Activated CD4-positive, alpha-beta T cell treated with anti-CD3 and anti-CD28 coated beads for 36 hours (primary cell): ENCODE measurements at regions of chr4 and their contacts with region 1.

Region 1: DNA sequence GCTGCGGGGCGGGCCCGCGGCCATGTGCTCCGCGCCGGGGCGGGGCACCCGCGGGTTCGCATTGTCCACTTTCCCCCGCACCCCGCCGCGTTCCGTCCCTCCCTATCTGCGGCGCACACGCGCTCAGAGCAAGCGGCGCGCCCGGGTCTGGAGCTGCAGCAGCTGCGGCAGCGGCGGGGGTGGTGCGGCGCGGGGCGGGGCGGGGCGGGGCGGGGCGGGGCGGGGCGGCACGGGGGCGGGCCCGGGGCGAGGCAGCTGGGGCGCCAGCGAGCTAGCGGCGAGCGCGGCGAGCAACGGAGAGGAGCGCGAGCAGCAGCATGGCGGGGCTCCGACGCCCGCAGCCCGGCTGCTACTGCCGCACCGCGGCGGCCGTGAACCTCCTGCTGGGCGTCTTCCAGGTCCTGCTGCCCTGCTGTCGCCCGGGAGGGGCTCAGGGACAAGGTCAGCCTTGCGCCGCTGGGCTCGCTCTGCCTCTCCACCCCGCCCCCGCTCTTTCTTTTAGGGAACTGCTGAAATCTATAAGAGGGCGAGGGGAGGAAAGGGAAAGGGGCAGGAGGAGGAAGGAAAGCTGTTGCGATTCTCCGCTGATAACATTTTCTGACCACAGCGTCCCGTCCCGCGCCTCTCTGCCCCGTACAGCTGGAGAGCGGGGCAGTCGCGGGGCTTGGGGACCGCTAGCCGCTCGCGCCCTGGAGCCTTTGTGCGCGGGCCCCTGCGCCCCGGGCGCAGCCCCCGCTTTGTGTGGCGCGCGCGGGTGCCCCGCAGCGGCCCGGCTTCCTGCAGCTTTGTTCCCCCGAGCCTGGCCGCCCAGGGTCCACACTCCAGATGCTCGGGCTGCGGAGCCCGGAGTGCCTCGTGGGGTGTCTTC is at the start of gene TMEM131L:
- DNase-seq: peak; percentile 82
- ATAC-seq: peak; percentile 63
- H3K4me3 Mint-ChIP-seq: peak within 1 kb of the TSS; percentile 94
- H3K27ac Mint-ChIP-seq: peak within 1 kb of the TSS; percentile 86
- H3K4me1 Mint-ChIP-seq: peaks cover 31% of the 10 kb centered on the region
- H3K27me3 Mint-ChIP-seq: no peaks in the 10 kb centered on the region
- total RNA-seq, gene TMEM131L: 45.8 to 45.9 TPM

Region 2: GRCh38 chr4:153127760-153128494 is 338.4 kb before region 1 on chr4:
- CTCF ChIA-PET with region 1: no interaction called
- POLR2A ChIA-PET with region 1: no interaction called
- intact Hi-C with region 1: no loop called
- DNase-seq: peak; percentile 91
- ATAC-seq: peak; percentile 86
- H3K4me3 Mint-ChIP-seq: no peak overlapping the region
- H3K27ac Mint-ChIP-seq: no peak overlapping the region
- H3K4me1 Mint-ChIP-seq: peaks cover 7% of the 10 kb centered on the region
- H3K27me3 Mint-ChIP-seq: no peaks in the 10 kb centered on the region

Region 3: GRCh38 chr4:153344131-153345010 is 121.9 kb before region 1 on chr4 and contains the start of gene MND1:
- CTCF ChIA-PET with region 1: interaction called, 9 read pairs
- POLR2A ChIA-PET with region 1: no interaction called
- intact Hi-C with region 1: loop called (anchors 1 to 2 kb)
- DNase-seq: peak; percentile 96
- ATAC-seq: peak; percentile 93
- H3K4me3 Mint-ChIP-seq: peak within 1 kb of the TSS; percentile 85
- H3K27ac Mint-ChIP-seq: peak within 1 kb of the TSS; percentile 90
- H3K4me1 Mint-ChIP-seq: peaks cover 36% of the 10 kb centered on the region
- H3K27me3 Mint-ChIP-seq: peaks cover 7% of the 10 kb centered on the region
- total RNA-seq, gene MND1: 34.1 to 41.9 TPM

Region 4: DNA sequence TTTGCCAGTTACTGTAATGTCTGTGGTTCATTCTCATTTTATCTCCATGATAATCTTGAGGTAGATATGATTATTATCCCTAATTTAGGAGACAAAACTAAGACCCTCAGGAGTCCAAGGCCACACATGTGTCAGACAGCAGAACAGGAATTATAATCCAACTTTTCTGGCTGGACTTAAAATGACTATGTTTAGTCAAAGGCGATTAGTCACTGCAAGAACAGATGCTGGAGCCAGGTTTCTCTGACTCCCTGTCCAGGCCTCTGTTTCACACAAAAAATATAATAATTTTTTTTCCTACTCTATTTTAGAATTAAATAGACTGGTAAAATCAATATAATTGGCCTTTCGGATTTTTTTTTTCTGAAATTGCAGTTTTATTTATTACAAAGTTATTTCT is 56.9 kb before region 1 on chr4:
- CTCF ChIA-PET with region 1: no interaction called
- POLR2A ChIA-PET with region 1: no interaction called
- intact Hi-C with region 1: no loop called
- DNase-seq: no peak
- ATAC-seq: no peak
- H3K4me3 Mint-ChIP-seq: no peak overlapping the region
- H3K27ac Mint-ChIP-seq: no peak overlapping the region
- H3K4me1 Mint-ChIP-seq: peaks cover 5% of the 10 kb centered on the region
- H3K27me3 Mint-ChIP-seq: no peaks in the 10 kb centered on the region

Region 5: GRCh38 chr4:153438916-153439756 is 27.2 kb before region 1 on chr4:
- CTCF ChIA-PET with region 1: interaction called, 4 read pairs
- POLR2A ChIA-PET with region 1: interaction called, 3 read pairs
- intact Hi-C with region 1: loop called in 1 of 2 experiments (anchors 1 kb)
- DNase-seq: peak; percentile 48
- ATAC-seq: peak; percentile 81
- H3K4me3 Mint-ChIP-seq: peak overlapping the region; percentile 73
- H3K27ac Mint-ChIP-seq: peak overlapping the region; percentile 91
- H3K4me1 Mint-ChIP-seq: peaks cover 38% of the 10 kb centered on the region
- H3K27me3 Mint-ChIP-seq: no peaks in the 10 kb centered on the region

Region 6: GRCh38 chr4:153488006-153488891 is 21.9 kb after region 1 on chr4:
- CTCF ChIA-PET with region 1: interaction called, 10 read pairs
- POLR2A ChIA-PET with region 1: interaction called, 5 read pairs
- intact Hi-C with region 1: loop called (anchors 1 kb)
- DNase-seq: peak; percentile 88
- ATAC-seq: peak; percentile 57
- H3K4me3 Mint-ChIP-seq: peak overlapping the region; percentile 57
- H3K27ac Mint-ChIP-seq: peak overlapping the region; percentile 92
- H3K4me1 Mint-ChIP-seq: peaks cover 78% of the 10 kb centered on the region
- H3K27me3 Mint-ChIP-seq: no peaks in the 10 kb centered on the region

Region 7: DNA sequence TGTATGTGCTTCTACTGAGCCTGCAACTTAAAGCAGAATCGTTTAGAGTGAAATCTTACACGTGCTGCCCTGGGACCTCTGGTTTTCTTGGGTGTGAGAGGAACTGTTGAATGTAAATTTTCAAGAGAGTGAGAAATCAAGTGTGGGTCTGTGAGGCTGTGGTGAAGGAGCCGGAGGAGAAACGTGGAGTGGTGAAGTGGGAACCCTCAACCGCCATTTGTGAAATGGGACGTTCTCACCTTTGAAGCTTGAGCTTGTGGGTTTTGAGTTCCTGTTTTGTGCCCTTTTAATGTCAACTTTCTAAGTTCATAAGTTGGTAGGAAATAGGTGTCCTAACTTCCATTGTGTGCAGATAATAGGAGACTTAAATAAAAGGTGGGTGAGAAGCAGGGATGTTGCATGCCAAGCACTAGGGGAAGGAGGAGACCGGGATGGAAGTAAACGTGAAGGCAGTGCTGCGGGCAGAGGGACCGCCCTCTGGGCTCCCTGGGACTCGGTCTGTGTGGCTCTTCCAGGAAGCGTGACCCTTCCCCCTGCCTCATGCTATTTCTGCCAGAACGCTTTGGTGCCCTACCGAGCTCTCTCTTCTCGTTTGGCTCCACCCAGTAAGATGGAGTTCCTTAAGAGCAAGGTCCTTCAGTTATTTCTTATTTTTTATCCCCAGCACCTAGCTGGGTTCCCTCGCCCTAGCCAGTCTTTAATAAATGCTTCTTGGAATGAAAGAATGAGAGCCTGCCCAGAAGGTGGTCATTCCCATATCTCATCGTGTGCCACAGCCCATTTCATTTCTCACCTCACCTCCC is 55.9 kb after region 1 on chr4:
- CTCF ChIA-PET with region 1: interaction called, 13 read pairs
- POLR2A ChIA-PET with region 1: interaction called, 5 read pairs
- intact Hi-C with region 1: loop called (anchors 1 to 2 kb)
- DNase-seq: peak; percentile 83
- ATAC-seq: peak; percentile 79
- H3K4me3 Mint-ChIP-seq: peak overlapping the region; percentile 61
- H3K27ac Mint-ChIP-seq: peak overlapping the region; percentile 98
- H3K4me1 Mint-ChIP-seq: peaks cover 95% of the 10 kb centered on the region
- H3K27me3 Mint-ChIP-seq: no peaks in the 10 kb centered on the region

Region 8: GRCh38 chr4:153573881-153574802 is 107.8 kb after region 1 on chr4:
- CTCF ChIA-PET with region 1: interaction called, 11 read pairs
- POLR2A ChIA-PET with region 1: interaction called, 3 read pairs
- intact Hi-C with region 1: loop called (anchors 1 to 10 kb)
- DNase-seq: peak; percentile 77
- ATAC-seq: peak; percentile 87
- H3K4me3 Mint-ChIP-seq: no peak overlapping the region
- H3K27ac Mint-ChIP-seq: peak overlapping the region; percentile 39
- H3K4me1 Mint-ChIP-seq: peaks cover 78% of the 10 kb centered on the region
- H3K27me3 Mint-ChIP-seq: no peaks in the 10 kb centered on the region

Region 9: GRCh38 chr4:153661211-153661822 is 195.0 kb after region 1 on chr4:
- CTCF ChIA-PET with region 1: no interaction called
- POLR2A ChIA-PET with region 1: no interaction called
- intact Hi-C with region 1: no loop called
- DNase-seq: no peak
- ATAC-seq: no peak
- H3K4me3 Mint-ChIP-seq: no peak overlapping the region
- H3K27ac Mint-ChIP-seq: no peak overlapping the region
- H3K4me1 Mint-ChIP-seq: no peaks in the 10 kb centered on the region
- H3K27me3 Mint-ChIP-seq: no peaks in the 10 kb centered on the region